Dendritic cell treated with granulocyte-macrophage colony-stimulating factor and Interleukin-4, amounts not matched to agents 40 ng/mL and 50 ng/mL, for 4 days (primary cell): ENCODE measurements at regions of chr1 and their contacts with region 1.

Region 1: DNA sequence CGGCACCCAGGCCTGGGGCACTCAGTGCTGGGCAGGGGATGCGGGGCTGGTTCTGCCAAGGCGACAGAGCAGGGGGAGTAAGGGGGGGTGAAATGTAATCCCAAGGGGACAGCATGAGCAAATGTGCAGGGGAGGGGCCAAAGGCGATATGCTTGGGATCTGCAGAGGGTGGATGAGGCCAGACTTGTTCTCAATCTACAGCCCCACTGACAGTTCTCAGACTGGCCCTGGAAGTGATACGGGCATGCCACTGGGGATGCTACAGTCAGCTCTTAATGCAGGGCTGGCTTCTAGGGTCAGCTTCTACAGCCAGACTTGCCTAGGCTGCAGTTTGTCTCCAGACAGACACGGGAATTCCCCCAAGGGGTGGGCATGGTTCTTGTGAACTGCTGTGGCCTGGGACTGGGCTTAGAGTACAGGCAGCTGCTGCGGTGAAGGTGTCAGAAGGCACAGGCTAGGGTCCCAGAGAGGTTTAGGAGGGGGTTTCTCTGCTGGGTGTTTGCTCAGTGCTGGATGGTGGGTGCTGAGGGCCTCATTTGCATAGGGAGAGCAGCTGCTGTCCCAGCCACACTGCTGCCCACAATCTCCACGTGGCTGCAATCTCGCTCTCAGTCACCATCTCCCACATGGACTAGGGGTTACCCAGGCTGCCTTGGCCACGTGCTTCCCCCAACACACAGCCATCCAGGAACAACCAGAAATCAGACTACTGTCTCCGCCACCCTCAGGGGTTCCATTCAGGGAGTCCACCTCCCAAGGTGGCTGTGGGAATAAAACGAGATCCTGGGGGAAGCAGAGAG is 190.1 kb downstream of the HIVEP3 start:
- H3K4me3 Mint-ChIP-seq: peak overlapping the region; percentile 35
- H3K27ac Mint-ChIP-seq: peak overlapping the region; percentile 89
- H3K4me1 Mint-ChIP-seq: peaks cover 89% of the 10 kb centered on the region
- H3K27me3 Mint-ChIP-seq: peaks cover 5% of the 10 kb centered on the region

Region 2: DNA sequence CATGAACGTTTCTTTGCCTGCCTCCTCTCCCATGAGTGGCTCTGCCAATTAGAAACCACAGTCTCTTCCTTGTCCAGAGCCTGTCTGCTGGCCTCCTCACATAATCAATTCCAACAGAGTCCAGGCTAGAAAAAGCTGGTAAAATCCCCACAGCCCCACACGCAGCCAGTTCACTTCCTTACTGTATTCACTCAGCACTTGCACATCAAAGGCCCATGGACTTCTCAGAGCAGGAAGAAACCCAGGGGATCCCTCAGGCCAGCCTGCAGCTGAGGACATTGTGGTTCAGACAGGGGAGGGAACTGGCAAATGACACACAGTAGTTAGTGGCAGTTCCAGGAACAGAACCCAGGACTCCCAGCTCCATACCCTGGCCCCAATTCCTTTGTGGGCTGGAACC is 72.5 kb before region 1 on chr1:
- intact Hi-C with region 1: loop called (anchors 2 kb)
- H3K4me3 Mint-ChIP-seq: peak overlapping the region; percentile 1
- H3K27ac Mint-ChIP-seq: peak overlapping the region; percentile 87
- H3K4me1 Mint-ChIP-seq: peaks cover 84% of the 10 kb centered on the region
- H3K27me3 Mint-ChIP-seq: peaks cover 4% of the 10 kb centered on the region

Region 3: GRCh38 chr1:41739061-41739955 is 10.7 kb after region 1 on chr1:
- intact Hi-C with region 1: loop called (anchors 1 kb)
- H3K4me3 Mint-ChIP-seq: peak overlapping the region; percentile 58
- H3K27ac Mint-ChIP-seq: peak overlapping the region; percentile 94
- H3K4me1 Mint-ChIP-seq: peaks cover 93% of the 10 kb centered on the region
- H3K27me3 Mint-ChIP-seq: peaks cover 6% of the 10 kb centered on the region

Region 4: DNA sequence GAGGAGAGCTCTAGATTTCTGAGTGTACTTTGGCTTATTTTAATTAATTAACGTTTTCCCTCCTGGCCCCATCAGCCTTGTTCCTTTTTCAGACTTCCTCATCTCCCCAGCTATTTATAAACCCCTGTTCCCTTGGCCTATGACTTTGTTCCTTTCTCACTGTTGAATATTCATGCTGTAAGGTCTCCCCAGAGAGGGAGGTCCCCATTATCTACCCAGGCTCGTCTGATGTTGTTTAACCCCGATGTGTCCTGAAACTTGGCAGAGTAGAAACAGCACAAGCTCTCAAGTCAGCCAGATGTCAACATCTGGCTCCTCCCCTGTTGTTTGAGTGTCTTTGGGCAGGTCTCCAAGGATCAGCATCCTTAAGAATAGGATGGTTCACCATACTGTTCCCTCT is 36.5 kb after region 1 on chr1:
- intact Hi-C with region 1: loop called (anchors 5 kb)
- H3K4me3 Mint-ChIP-seq: peak overlapping the region; percentile 58
- H3K27ac Mint-ChIP-seq: peak overlapping the region; percentile 88
- H3K4me1 Mint-ChIP-seq: peaks cover 79% of the 10 kb centered on the region
- H3K27me3 Mint-ChIP-seq: peaks cover 7% of the 10 kb centered on the region